ENCODE measurements at regions of chr5 and their contacts with region 1.

Region 1: GRCh38 chr5:109409844-109410388 is at the start of gene PJA2:
- DNase-seq: peak; percentile 99
- H3K4me3 ChIP-seq: peak within 1 kb of the TSS; percentile 66 to 89 (median 74)
- H3K27ac ChIP-seq: peak within 1 kb of the TSS; percentile 97 to 100 (median 99)
- H3K4me1 ChIP-seq: peaks cover 22 to 60% (median 45%) of the 10 kb centered on the region in 6 donors
- H3K27me3 ChIP-seq: no peaks in the 10 kb centered on the region
- CTCF ChIP-seq: peak; percentile 32 to 84 (median 68)
- POLR2A ChIP-seq: peak in 2 of 3 donors; percentile 59 to 87
- total RNA-seq, gene PJA2: 84.0 to 133 (median 107) TPM

Region 2: GRCh38 chr5:108836492-108836891 is 573.4 kb before region 1 on chr5:
- intact Hi-C with region 1: no loop called
- DNase-seq: no peak
- H3K4me3 ChIP-seq: no peak overlapping the region
- H3K27ac ChIP-seq: no peak overlapping the region
- H3K4me1 ChIP-seq: no peaks in the 10 kb centered on the region
- H3K27me3 ChIP-seq: no peaks in the 10 kb centered on the region
- CTCF ChIP-seq: no peak
- POLR2A ChIP-seq: no peak

Region 3: GRCh38 chr5:109354761-109355160 is 55.2 kb before region 1 on chr5:
- intact Hi-C with region 1: loop called (anchors 10 kb)
- DNase-seq: no peak
- H3K4me3 ChIP-seq: no peak overlapping the region
- H3K27ac ChIP-seq: no peak overlapping the region
- H3K4me1 ChIP-seq: peaks cover 0 to 12% (median 4%) of the 10 kb centered on the region in 6 donors
- H3K27me3 ChIP-seq: no peaks in the 10 kb centered on the region
- CTCF ChIP-seq: no peak
- POLR2A ChIP-seq: no peak

Region 4: GRCh38 chr5:109688971-109689739 is 279.2 kb after region 1 on chr5:
- intact Hi-C with region 1: loop called (anchors 10 kb)
- DNase-seq: peak; percentile 96
- H3K4me3 ChIP-seq: peak overlapping the region; percentile 73 to 97 (median 86)
- H3K27ac ChIP-seq: peak overlapping the region; percentile 93 to 99 (median 98)
- H3K4me1 ChIP-seq: peaks cover 22 to 42% (median 34%) of the 10 kb centered on the region in 6 donors
- H3K27me3 ChIP-seq: no peaks in the 10 kb centered on the region
- CTCF ChIP-seq: peak in 2 of 11 experiments; percentile 10 to 33
- POLR2A ChIP-seq: peak; percentile 34 to 93 (median 70)